ENCODE measurements at regions of chr2 and their contacts with region 1.

Region 1: GRCh38 chr2:139645617-139646016 is 865.4 kb upstream of the NXPH2 start:
- DNase-seq: no peak
- ATAC-seq: no peak
- H3K4me3 ChIP-seq: no peak overlapping the region
- H3K27ac ChIP-seq: no peak overlapping the region
- H3K4me1 ChIP-seq: no peaks in the 10 kb centered on the region
- H3K27me3 ChIP-seq: no peaks in the 10 kb centered on the region
- CTCF ChIP-seq: no peak
- POLR2A ChIP-seq: no peak
- RAD21 ChIP-seq: no peak

Region 2: DNA sequence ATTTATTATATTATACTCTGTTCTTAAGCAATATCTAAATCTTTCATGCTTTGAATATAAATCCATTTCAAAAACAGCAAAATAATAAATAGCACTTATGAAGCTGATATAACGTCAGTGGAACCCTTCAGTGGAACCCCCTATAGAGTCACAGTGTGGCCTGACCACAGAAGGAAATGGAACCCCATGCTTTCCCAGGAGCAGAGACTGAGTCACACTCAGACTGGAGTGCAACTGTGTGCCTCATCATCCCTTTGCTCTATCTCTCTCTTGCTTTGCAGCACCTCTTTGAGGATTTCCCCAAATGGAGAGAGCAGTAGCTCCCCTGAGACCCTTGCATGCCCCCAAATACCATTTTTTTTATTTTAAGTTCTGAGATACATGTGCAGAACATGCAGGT is 878.5 kb before region 1 on chr2:
- CTCF ChIA-PET with region 1: no interaction called
- POLR2A ChIA-PET with region 1: no interaction called
- dilution Hi-C with region 1: no loop called
- in situ Hi-C with region 1: no loop called
- intact Hi-C with region 1: loop called (anchors 5 kb)
- DNase-seq: no peak
- ATAC-seq: no peak
- H3K4me3 ChIP-seq: no peak overlapping the region
- H3K27ac ChIP-seq: no peak overlapping the region
- H3K4me1 ChIP-seq: no peaks in the 10 kb centered on the region
- H3K27me3 ChIP-seq: no peaks in the 10 kb centered on the region
- CTCF ChIP-seq: no peak
- POLR2A ChIP-seq: no peak
- RAD21 ChIP-seq: no peak